B cell (primary cell): ENCODE measurements at regions of chr6 and their contacts with region 1.

Region 1: DNA sequence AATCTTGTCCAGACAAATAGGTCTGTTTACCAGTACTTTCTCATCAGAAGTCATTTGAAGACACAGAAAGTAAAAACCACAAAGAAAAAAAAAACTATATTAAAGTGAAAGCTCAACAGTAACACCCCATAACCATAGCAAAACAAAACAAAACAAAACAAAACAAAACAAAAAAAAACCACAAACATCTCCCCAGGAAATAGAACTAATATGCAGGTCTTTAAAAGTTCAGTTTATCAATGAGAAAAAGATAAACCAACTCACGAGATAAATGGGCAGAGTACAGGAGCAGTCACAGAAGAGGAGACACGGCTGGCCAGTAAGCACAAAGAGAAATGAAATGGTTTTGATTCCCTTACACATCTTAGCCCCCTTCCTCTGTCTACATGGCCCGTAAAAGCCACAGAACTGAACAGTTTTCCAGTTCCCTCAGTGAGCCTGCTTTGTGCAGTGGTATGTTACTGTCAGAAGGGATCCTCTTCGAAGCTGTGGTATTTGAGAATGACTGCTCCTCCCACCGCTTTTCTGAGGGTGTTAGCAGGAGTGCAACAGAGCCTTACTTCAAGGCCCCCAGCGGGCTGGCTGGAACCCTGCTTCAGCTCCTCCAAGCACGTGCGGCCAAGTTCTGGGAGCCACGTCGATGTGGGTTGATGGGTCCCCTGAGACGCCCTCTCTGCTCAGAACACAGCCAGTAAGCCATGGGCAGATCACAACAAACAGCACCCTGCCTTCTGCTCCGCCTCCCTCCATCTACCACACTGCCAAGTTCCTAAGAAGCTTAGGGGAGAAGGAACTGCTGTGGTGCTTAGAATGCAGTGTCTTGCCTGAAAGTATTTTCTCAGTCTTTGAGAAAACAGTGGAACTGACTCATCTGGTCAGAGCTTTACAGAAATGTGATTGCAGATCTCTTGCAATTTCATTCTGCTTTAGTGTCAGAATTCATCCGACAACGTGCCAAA is 14.0 kb downstream of the UST start:
- DNase-seq: peak; percentile 94
- ATAC-seq: peak; percentile 62
- H3K4me3 ChIP-seq: peak overlapping the region; percentile 28 to 61 (median 44)
- H3K4me3 Mint-ChIP-seq: peak overlapping the region; percentile 85
- H3K27ac ChIP-seq: peak overlapping the region; percentile 98
- H3K27ac Mint-ChIP-seq: peak overlapping the region; percentile 93
- H3K4me1 ChIP-seq: peaks cover 81 to 82% of the 10 kb centered on the region in 2 donors
- H3K4me1 Mint-ChIP-seq: peaks cover 94% of the 10 kb centered on the region
- H3K27me3 ChIP-seq: no peaks in the 10 kb centered on the region
- H3K27me3 Mint-ChIP-seq: no peaks in the 10 kb centered on the region
- CTCF ChIP-seq: no peak

Region 2: GRCh38 chr6:147559006-147559405 is 1201.8 kb before region 1 on chr6:
- CTCF ChIA-PET with region 1: no interaction called
- POLR2A ChIA-PET with region 1: no interaction called
- intact Hi-C with region 1: no loop called
- DNase-seq: no peak
- ATAC-seq: no peak
- H3K4me3 ChIP-seq: no peak overlapping the region
- H3K4me3 Mint-ChIP-seq: no peak overlapping the region
- H3K27ac ChIP-seq: no peak overlapping the region
- H3K27ac Mint-ChIP-seq: no peak overlapping the region
- H3K4me1 ChIP-seq: no peaks in the 10 kb centered on the region
- H3K4me1 Mint-ChIP-seq: no peaks in the 10 kb centered on the region
- H3K27me3 ChIP-seq: no peaks in the 10 kb centered on the region
- H3K27me3 Mint-ChIP-seq: no peaks in the 10 kb centered on the region
- CTCF ChIP-seq: no peak

Region 3: DNA sequence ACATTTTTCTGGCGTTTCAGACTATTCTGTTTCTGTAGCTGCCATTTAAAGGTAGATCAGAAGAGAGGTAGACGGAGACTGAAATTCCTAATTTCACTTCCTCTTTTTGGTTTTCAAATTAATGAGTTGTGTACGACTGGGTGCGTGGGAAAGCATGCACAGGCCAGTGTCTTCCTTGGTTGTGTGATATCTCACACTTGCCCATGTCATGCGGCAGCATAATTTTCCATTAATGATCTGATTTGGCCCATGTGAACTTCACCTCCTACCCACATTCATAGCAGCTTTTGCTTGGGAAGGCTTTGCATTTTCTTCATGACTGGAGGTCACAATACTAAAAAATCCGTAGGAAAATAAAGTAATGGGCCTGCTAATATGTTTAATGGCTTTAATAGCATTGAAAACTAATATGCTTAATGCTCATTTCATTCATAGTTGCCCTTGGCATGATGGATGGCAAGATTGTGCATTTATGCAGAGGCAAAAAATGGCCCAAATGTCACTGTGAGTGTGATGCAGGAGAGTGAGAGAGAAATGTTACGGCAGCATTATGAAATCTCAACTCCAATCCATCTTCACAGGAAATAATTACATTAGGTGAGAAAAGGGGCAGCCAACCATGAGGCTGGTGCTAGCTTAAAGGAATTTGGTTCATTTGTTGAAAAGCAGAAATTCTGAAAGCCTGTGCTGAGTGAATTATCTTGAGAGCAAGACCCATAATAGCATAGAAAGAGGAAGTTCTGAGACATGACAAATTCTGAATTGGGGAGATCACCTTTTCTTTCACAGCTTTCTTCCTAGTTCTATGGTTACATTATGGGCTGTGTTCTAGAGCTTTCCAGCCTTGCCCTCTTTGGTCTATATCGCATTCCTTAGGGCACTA is 83.0 kb before region 1 on chr6:
- CTCF ChIA-PET with region 1: interaction called, 3 read pairs
- POLR2A ChIA-PET with region 1: interaction called, 4 read pairs
- intact Hi-C with region 1: loop called (anchors 5 kb)
- DNase-seq: peak; percentile 82
- ATAC-seq: peak; percentile 79
- H3K4me3 ChIP-seq: peak overlapping the region in 3 of 5 experiments; percentile 6 to 50 (median 15)
- H3K4me3 Mint-ChIP-seq: peak overlapping the region; percentile 71
- H3K27ac ChIP-seq: peak overlapping the region; percentile 74 to 81
- H3K27ac Mint-ChIP-seq: peak overlapping the region; percentile 88
- H3K4me1 ChIP-seq: peaks cover 56% of the 10 kb centered on the region in 2 donors
- H3K4me1 Mint-ChIP-seq: peaks cover 54% of the 10 kb centered on the region
- H3K27me3 ChIP-seq: no peaks in the 10 kb centered on the region
- H3K27me3 Mint-ChIP-seq: no peaks in the 10 kb centered on the region
- CTCF ChIP-seq: no peak

Region 4: DNA sequence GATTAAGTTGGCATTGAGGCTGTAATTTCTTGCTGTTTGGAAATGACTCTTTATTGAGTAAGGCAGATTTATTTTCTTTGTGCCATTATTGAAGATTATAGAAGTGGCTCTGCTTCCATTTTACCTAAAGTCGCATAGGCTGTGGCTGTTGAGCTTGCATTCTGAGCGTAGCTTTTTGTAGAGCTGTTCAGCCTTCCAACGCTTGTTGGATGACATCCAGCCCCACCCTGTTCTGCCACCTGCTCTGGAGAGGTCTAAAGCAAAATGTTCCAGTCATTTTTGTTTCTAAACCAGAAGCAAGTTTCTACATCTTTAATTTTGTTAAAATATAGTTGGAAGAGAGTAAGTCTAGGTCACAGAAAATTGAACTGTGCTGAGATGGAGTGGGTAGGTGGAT is 10.4 kb after region 1 on chr6:
- CTCF ChIA-PET with region 1: interaction called, 14 read pairs
- POLR2A ChIA-PET with region 1: interaction called, 5 read pairs
- intact Hi-C with region 1: loop called (anchors 1 kb)
- DNase-seq: no peak
- ATAC-seq: no peak
- H3K4me3 ChIP-seq: no peak overlapping the region
- H3K4me3 Mint-ChIP-seq: peak overlapping the region; percentile 76
- H3K27ac ChIP-seq: peak overlapping the region in 1 of 2 donors; percentile 65
- H3K27ac Mint-ChIP-seq: peak overlapping the region; percentile 67
- H3K4me1 ChIP-seq: peaks cover 56 to 58% of the 10 kb centered on the region in 2 donors
- H3K4me1 Mint-ChIP-seq: peaks cover 64% of the 10 kb centered on the region
- H3K27me3 ChIP-seq: no peaks in the 10 kb centered on the region
- H3K27me3 Mint-ChIP-seq: no peaks in the 10 kb centered on the region
- CTCF ChIP-seq: no peak

Region 5: DNA sequence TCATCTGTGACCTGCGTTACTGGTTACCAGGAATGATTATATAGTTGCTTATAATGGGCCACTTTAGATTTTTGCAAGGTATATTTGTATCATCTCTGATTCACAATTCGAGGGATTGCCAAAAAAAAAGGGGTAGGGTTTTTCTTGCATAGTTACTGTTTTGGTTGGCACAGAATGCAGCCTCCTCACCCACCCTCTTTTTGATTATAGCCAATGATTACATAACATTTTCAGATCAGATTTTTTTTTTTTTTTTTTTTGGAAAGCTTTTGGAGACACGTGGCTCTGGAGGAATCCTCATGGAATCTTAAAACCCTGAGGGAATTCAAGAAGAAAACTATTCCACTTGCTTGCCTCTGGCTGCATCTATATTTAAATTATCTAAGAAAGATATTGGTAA is 39.7 kb after region 1 on chr6:
- CTCF ChIA-PET with region 1: no interaction called
- POLR2A ChIA-PET with region 1: interaction called, 3 read pairs
- intact Hi-C with region 1: loop called (anchors 5 kb)
- DNase-seq: no peak
- ATAC-seq: no peak
- H3K4me3 ChIP-seq: no peak overlapping the region
- H3K4me3 Mint-ChIP-seq: no peak overlapping the region
- H3K27ac ChIP-seq: no peak overlapping the region
- H3K27ac Mint-ChIP-seq: no peak overlapping the region
- H3K4me1 ChIP-seq: peaks cover 31 to 36% of the 10 kb centered on the region in 2 donors
- H3K4me1 Mint-ChIP-seq: peaks cover 61% of the 10 kb centered on the region
- H3K27me3 ChIP-seq: no peaks in the 10 kb centered on the region
- H3K27me3 Mint-ChIP-seq: no peaks in the 10 kb centered on the region
- CTCF ChIP-seq: no peak

Region 6: DNA sequence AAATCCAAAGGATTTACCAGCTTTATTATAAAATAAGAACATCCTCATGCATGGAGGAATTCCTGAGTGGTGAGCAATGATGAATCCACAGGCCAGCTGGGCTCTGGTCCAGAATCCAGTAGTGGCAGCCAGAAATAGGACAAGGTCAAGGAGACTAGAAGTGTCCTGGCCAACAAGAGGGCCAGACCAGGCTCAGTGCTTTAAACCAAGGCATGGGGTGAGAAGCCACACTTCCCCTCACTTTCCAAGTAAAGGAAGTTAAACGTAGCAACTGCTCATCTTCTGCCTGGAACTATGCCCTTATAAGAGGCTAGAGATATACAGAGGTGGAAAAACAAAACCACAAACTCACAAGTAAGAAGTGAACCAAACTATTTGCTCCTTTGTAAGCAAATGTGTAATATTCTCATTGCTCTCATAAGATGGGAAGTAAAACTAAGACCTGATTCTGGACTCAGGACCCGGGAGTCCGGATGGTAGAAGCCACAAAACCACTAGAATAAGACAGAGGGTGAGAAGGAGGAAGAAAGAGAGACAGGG is 239.2 kb after region 1 on chr6:
- CTCF ChIA-PET with region 1: no interaction called
- POLR2A ChIA-PET with region 1: no interaction called
- intact Hi-C with region 1: no loop called
- DNase-seq: peak; percentile 44
- ATAC-seq: peak; percentile 43
- H3K4me3 ChIP-seq: no peak overlapping the region
- H3K4me3 Mint-ChIP-seq: peak overlapping the region; percentile 0
- H3K27ac ChIP-seq: peak overlapping the region in 1 of 2 donors; percentile 22
- H3K27ac Mint-ChIP-seq: peak overlapping the region; percentile 0
- H3K4me1 ChIP-seq: peaks cover 28 to 30% of the 10 kb centered on the region in 2 donors
- H3K4me1 Mint-ChIP-seq: peaks cover 40% of the 10 kb centered on the region
- H3K27me3 ChIP-seq: no peaks in the 10 kb centered on the region
- H3K27me3 Mint-ChIP-seq: no peaks in the 10 kb centered on the region
- CTCF ChIP-seq: no peak

Region 7: DNA sequence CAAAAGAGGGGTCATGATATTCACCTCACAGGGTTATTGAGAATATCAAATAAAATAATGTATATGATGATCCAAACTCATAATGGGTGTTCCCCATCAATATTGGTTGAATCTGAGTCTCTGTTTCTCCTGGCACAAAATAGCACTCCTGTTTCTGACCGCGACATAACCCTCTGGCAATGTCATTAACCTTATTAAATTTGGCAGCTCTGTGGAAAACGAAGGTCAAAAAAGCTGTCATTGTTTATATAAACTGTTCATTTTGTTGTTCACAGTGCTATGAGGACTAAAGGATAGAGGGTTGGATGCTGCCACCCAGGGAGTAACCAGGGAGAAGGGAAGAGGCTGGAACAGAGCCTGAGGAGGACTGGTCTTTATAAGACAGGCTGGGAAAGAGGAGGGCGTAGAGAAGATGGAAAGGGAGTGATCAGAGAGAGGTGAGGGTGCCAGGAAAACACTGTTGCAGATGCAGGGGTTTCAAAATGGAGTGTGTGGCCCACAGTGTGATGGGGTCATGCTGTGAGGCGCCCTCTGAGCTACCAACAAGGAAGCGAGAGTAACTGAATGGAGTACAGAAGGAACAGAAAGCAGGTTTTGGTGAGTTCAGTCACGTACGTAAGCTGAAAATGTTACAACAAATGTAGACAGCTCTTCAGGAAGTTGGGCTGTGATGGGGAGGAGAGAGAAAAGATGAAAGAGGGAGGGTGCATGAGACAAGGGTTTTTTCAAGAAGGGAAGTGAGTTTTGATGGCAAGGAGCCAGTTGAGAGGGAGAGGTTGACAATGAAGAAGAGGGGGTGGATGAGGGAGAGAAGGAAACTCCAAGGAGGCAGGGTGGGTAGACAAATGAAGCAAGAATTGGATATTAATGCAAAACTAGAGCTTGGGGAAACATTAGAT is 305.1 kb after region 1 on chr6:
- CTCF ChIA-PET with region 1: no interaction called
- POLR2A ChIA-PET with region 1: no interaction called
- intact Hi-C with region 1: loop called (anchors 1 kb)
- DNase-seq: peak; percentile 88
- ATAC-seq: peak; percentile 96
- H3K4me3 ChIP-seq: no peak overlapping the region
- H3K4me3 Mint-ChIP-seq: peak overlapping the region; percentile 29
- H3K27ac ChIP-seq: peak overlapping the region; percentile 85 to 86
- H3K27ac Mint-ChIP-seq: peak overlapping the region; percentile 87
- H3K4me1 ChIP-seq: peaks cover 21 to 32% of the 10 kb centered on the region in 2 donors
- H3K4me1 Mint-ChIP-seq: peaks cover 35% of the 10 kb centered on the region
- H3K27me3 ChIP-seq: no peaks in the 10 kb centered on the region
- H3K27me3 Mint-ChIP-seq: no peaks in the 10 kb centered on the region
- CTCF ChIP-seq: no peak

Region 8: DNA sequence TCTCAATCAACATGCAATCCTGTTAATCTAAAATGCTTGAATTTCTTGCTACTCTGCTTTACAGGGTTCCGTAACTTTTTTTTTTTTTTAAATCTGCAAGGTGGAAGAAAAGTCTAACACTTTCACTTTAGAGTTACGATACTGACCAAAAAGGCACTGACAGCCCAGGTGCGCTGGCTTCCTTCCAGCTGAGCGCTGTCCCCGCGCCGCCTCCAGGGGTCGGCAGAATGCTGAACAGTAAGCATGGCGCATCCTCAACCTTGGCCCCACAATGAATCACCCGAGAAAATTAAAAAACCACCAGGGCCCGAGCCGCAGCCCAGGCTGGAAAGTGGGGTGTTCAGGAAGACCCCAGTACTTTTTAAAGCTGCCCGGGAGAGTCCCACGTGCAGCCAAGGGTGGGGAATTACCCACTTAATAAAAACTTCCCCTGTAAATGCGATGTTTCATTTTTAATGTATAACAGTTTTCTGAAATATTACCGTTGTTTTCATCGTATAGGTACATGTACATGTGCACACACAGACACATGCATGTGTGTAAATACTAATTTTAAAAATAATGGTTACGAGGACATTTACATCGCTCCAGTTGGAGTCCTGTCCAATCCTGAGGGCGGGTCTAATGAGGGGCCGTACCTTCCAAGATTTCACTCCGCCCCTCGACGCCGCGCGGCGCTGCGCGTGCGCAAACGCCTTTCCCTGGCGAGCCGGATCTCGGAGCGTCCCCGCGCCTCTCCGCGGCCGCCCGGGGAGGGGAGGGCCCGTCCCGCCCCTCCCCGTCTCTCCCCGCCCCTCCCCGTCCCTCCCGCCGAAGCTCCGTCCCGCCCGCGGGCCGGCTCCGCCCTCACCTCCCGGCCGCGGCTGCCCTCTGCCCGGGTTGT is 804.9 kb after region 1 on chr6 and contains the start of gene GINM1:
- CTCF ChIA-PET with region 1: no interaction called
- POLR2A ChIA-PET with region 1: no interaction called
- intact Hi-C with region 1: loop called (anchors 10 kb)
- DNase-seq: peak; percentile 98
- ATAC-seq: peak; percentile 83
- H3K4me3 ChIP-seq: peak within 1 kb of the TSS; percentile 83 to 100 (median 96)
- H3K4me3 Mint-ChIP-seq: peak within 1 kb of the TSS; percentile 99
- H3K27ac ChIP-seq: peak within 1 kb of the TSS; percentile 84 to 92
- H3K27ac Mint-ChIP-seq: peak within 1 kb of the TSS; percentile 98
- H3K4me1 ChIP-seq: peaks cover 13 to 26% of the 10 kb centered on the region in 2 donors
- H3K4me1 Mint-ChIP-seq: peaks cover 23% of the 10 kb centered on the region
- H3K27me3 ChIP-seq: no peaks in the 10 kb centered on the region
- H3K27me3 Mint-ChIP-seq: no peaks in the 10 kb centered on the region
- CTCF ChIP-seq: peak; percentile 77
- total RNA-seq, gene GINM1: 22.1 and 23.0 TPM in 2 replicates